ENCODE measurements at regions of chr1 and their contacts with region 1.

Region 1: DNA sequence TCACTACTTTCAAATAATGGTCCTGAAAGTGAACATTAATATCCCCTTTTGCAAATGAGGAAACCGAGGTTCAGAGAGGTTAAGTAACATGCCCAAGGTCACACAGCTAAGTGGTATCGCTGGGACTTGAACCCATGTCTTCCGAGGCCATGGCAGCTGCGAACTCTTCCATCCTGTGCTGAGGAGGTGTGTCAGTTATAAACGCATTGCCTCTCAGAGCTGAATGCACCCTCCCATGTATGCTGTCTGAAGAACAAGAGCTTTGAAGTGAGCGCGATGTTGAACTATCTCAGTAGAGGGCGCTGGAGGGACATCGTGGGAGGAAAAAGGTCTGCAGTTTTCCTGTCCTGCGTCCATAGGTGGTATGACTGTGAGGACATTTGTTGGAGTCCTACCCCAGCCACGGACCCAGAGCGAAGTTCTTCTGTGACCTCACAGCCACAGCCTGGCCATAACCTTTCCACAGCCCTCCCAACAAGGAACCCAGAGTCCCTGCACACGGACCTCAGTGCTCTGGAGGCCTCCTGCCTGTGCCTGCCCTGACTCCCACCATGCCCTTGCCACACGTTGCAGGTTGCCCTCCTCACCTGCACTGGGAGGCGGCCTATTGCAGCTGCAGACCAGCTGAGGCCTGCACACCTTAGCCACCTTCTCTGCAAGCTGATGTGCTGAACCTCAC is 7.5 kb downstream of the MYOC start:
- DNase-seq: no peak
- ATAC-seq: peak; percentile 80

Region 2: DNA sequence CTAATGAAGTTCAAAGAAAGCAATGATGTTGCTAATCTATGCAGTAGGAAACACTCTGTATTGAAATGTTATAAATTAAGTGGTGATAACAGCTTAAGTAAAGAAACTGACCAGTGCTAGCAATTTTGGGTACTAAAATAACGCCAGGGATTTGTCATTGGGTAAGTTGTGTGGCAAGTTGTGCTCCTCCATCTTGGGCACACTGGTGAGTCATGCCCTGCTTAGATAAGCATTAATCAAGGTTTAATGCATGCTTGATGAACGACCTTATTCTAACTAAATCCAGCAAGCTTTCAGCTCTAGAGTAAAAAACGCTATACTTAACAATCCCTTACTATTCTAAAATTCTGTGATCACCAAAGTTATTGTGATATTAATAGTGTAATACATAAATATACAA is 71.7 kb after region 1 on chr1:
- intact Hi-C with region 1: loop called (anchors 1 kb)
- DNase-seq: no peak
- ATAC-seq: no peak

Region 3: GRCh38 chr1:171741872-171742576 is 97.1 kb after region 1 on chr1 and contains the start of gene VAMP4:
- intact Hi-C with region 1: loop called (anchors 1 kb)
- DNase-seq: peak; percentile 95
- ATAC-seq: peak; percentile 91
- total RNA-seq, gene VAMP4: 11.4 TPM

Region 4: DNA sequence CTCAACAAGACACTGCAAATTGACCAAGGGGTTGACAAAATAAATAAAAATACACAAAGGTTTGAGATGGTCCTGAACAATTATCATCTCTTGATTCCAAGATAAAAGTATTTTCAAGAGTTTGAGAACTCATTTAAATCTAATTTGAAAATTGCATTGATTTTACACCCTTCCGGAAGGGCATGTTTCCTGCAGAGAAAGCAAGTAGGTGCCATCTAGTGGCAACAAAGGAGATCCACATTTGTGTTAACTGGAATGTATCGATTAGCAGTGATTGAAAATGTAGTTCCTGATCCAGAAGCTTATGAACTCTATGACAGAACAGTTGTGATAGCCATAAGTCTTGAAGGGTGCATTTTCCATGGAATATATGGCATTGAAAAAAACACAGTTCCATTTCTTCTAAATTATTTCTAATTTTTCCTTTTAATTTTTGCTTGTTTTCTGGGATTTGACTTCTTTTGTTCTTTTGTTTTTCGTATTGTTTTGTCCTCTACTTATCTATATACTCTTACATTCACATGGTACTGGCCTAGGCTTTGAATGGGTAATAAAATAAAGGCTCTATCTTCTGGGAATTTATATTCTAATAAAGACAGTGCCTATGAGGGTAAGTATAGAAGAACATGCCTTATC is 340.0 kb after region 1 on chr1:
- intact Hi-C with region 1: loop called (anchors 2 kb)
- DNase-seq: no peak
- ATAC-seq: peak; percentile 52

Measured in Right ventricle myocardium inferior (tissue), 1 donor.